ENCODE measurements at regions of chr6 and their contacts with region 1.

Region 1: GRCh38 chr6:38320843-38321242 is 318.9 kb downstream of the BTBD9 start:
- DNase-seq: no peak
- ATAC-seq: no peak
- H3K4me3 ChIP-seq: no peak overlapping the region
- H3K27ac ChIP-seq: no peak overlapping the region
- H3K4me1 ChIP-seq: peaks cover 0 to 17% (median 0%) of the 10 kb centered on the region in 9 donors
- H3K27me3 ChIP-seq: no peaks in the 10 kb centered on the region
- CTCF ChIP-seq: no peak

Region 2: DNA sequence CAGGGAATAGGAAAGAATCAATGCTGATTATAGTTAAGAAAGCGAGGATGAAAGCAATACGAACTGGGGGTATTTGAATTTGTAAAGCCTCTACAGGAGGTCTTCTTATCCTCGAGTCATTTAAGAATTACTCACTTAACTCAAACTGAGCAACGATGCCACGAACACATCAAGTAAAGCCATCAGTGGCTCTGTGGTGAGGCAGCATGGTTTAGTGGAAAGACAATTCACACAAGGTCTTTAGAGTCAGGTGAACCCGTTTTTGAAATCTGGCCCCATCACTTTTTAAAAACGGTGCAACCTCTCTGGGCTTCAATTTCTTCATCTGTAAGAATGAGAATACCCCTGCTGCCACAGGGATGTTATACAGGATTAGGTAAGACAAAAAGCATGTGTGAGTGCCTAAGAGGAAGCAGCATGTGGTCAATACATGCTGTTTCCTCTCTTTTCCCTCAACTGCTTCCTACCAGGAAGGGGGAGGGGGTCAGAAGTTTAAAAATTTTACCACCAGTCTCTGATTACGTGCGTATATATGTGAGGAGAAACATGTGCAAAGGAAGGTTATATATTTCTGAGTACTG is 156.9 kb after region 1 on chr6:
- intact Hi-C with region 1: loop called in 1 of 10 experiments (anchors 10 kb)
- DNase-seq: no peak
- ATAC-seq: no peak
- H3K4me3 ChIP-seq: no peak overlapping the region
- H3K27ac ChIP-seq: no peak overlapping the region
- H3K4me1 ChIP-seq: peaks cover 0 to 30% (median 0%) of the 10 kb centered on the region in 9 donors
- H3K27me3 ChIP-seq: no peaks in the 10 kb centered on the region
- CTCF ChIP-seq: no peak

Measured in heart right ventricle (tissue), 16 donors.